Heart left ventricle (tissue), 16 donors: ENCODE measurements at regions of chr21 and their contacts with region 1.

Region 1: GRCh38 chr21:17903029-17903806 is 84.1 kb upstream of the C21orf91 start:
- DNase-seq: no peak
- ATAC-seq: no peak
- H3K4me3 ChIP-seq: no peak overlapping the region
- H3K27ac ChIP-seq: no peak overlapping the region
- H3K4me1 ChIP-seq: peaks cover 0 to 19% (median 13%) of the 10 kb centered on the region in 12 donors
- H3K27me3 ChIP-seq: no peaks in the 10 kb centered on the region
- CTCF ChIP-seq: peak in 10 of 12 donors; percentile 21 to 55 (median 42)
- POLR2A ChIP-seq: no peak

Region 2: DNA sequence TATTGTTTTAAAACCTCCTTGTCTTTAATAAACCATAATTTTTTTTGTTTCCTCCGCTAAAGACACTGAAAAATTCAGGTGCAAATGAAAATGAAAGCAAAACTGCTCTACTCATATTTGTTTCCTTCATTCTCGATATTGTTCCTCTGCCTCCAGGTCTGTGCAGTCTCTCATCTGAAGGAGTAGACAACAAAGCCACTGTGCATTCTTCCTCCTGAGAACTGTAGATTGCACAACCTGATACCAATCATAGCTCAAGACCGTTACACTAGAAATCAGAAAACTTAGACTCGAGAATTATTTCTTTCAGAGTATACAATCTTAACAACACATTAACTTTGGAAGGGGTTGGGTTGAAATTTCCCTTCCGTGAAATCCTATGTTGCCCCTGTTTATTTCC is 763.5 kb before region 1 on chr21:
- intact Hi-C with region 1: no loop called
- DNase-seq: no peak
- ATAC-seq: no peak
- H3K4me3 ChIP-seq: peak overlapping the region in 10 of 12 donors; percentile 2 to 58 (median 45)
- H3K27ac ChIP-seq: peak overlapping the region in 5 of 12 donors; percentile 11 to 44 (median 39)
- H3K4me1 ChIP-seq: no peaks in the 10 kb centered on the region
- H3K27me3 ChIP-seq: no peaks in the 10 kb centered on the region
- CTCF ChIP-seq: no peak
- POLR2A ChIP-seq: no peak

Region 3: DNA sequence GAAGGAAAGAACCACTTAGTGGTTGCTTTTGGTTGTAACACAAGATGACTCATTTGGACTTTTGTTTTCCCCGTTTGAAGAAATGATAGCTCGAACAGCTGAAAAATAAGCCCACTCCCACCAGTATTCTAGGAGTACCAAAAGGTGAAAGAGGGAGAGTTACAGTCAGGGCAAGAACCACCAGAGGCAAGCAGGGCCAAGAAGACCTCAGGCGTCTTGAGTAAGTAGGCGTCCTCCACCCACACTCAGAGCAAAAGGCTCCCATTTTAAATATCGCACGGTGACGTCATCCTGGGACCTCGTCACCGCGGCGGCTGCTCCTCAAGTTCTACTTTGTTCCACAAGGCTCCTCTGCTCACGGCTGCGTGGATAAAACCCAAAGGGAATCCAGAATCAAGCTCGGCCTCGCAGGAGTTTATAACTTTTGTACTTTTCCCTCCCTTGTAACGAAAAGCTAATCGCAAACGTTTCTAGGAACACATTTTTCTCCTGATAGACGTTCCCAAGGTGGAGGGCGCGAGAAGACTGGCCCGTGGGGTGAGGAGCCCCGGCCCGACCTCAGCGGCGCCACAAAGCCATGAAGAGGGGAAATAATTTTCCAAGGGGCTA is 291.7 kb before region 1 on chr21:
- intact Hi-C with region 1: loop called in 1 of 10 experiments (anchors 5 kb)
- DNase-seq: peak; percentile 72 to 85 (median 80)
- ATAC-seq: peak; percentile 55 to 87 (median 70)
- H3K4me3 ChIP-seq: peak overlapping the region; percentile 50 to 88 (median 79)
- H3K27ac ChIP-seq: peak overlapping the region in 11 of 12 donors; percentile 72 to 91 (median 83)
- H3K4me1 ChIP-seq: peaks cover 0 to 13% (median 6%) of the 10 kb centered on the region in 12 donors
- H3K27me3 ChIP-seq: no peaks in the 10 kb centered on the region
- CTCF ChIP-seq: no peak
- POLR2A ChIP-seq: no peak

Region 4: GRCh38 chr21:17679002-17679600 is 224.1 kb before region 1 on chr21:
- intact Hi-C with region 1: loop called (anchors 1 to 5 kb)
- DNase-seq: peak in 1 of 5 donors; percentile 17
- ATAC-seq: peak; percentile 55 to 84 (median 77)
- H3K4me3 ChIP-seq: no peak overlapping the region
- H3K27ac ChIP-seq: no peak overlapping the region
- H3K4me1 ChIP-seq: no peaks in the 10 kb centered on the region
- H3K27me3 ChIP-seq: no peaks in the 10 kb centered on the region
- CTCF ChIP-seq: peak; percentile 73 to 91 (median 83)
- POLR2A ChIP-seq: no peak